Activated CD4-positive, alpha-beta memory T cell treated with anti-CD3 and anti-CD28 coated beads, Interleukin-2, amount 10 ng/mL, durations not matched to agents 7 days and 5 days (primary cell): ENCODE measurements at regions of chr9 and their contacts with region 1.

Region 1: GRCh38 chr9:133149126-133150107 is 14.3 kb downstream of the GBGT1 start:
- DNase-seq: peak; percentile 83
- H3K4me3 Mint-ChIP-seq: peak overlapping the region; percentile 69
- H3K27ac Mint-ChIP-seq: peak overlapping the region; percentile 58
- H3K4me1 Mint-ChIP-seq: peaks cover 38% of the 10 kb centered on the region
- H3K27me3 Mint-ChIP-seq: no peaks in the 10 kb centered on the region

Region 2: DNA sequence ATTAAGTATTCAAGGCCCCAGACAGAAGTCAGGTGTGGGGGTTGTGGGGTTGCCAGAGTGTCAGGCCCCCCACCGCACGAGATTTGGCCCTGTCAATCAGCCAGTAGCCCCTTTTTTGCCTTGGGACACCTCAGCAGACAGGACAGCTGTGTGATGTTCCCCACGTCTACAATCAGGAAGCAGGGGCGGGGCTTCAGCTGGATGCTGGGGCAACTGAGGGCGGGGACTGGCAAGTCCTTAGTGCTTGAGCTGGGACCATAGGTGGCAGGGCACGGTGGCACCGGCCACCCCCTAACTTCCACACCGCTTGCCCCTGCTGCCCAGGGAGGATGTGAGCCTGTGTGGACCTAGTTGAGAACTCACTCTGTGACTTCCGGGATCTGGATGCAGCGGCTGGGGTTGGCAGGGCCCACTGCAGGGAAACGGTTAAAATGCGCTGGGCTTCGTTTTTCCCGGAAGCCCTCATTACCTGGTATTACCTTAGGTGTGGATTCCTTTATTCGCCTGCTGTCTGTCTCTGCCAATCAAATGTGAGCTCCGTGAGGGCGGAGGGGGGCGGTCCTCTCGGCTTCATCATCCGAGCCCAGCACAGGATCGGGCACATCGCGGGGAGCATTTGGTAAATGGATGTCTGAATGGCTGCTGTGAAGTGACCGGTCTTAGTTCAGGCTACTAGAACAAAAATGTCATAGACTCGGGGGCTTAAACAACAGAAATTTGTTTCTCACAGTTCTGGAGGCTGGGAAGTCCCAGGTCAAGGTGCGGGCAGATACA is 126.1 kb before region 1 on chr9:
- CTCF ChIA-PET with region 1: interaction called, 35 read pairs
- POLR2A ChIA-PET with region 1: interaction called, 8 read pairs
- DNase-seq: peak; percentile 76
- H3K4me3 Mint-ChIP-seq: peak overlapping the region; percentile 44
- H3K27ac Mint-ChIP-seq: peak overlapping the region; percentile 49
- H3K4me1 Mint-ChIP-seq: peaks cover 20% of the 10 kb centered on the region
- H3K27me3 Mint-ChIP-seq: peaks cover 4% of the 10 kb centered on the region

Region 3: GRCh38 chr9:133103183-133103986 is 46.0 kb before region 1 on chr9:
- CTCF ChIA-PET with region 1: interaction called, 131 read pairs
- POLR2A ChIA-PET with region 1: interaction called, 22 read pairs
- DNase-seq: peak; percentile 58
- H3K4me3 Mint-ChIP-seq: no peak overlapping the region
- H3K27ac Mint-ChIP-seq: peak overlapping the region; percentile 64
- H3K4me1 Mint-ChIP-seq: no peaks in the 10 kb centered on the region
- H3K27me3 Mint-ChIP-seq: no peaks in the 10 kb centered on the region

Region 4: GRCh38 chr9:133108794-133109641 is 40.4 kb before region 1 on chr9:
- CTCF ChIA-PET with region 1: interaction called, 131 read pairs
- POLR2A ChIA-PET with region 1: interaction called, 131 read pairs
- DNase-seq: no peak
- H3K4me3 Mint-ChIP-seq: no peak overlapping the region
- H3K27ac Mint-ChIP-seq: no peak overlapping the region
- H3K4me1 Mint-ChIP-seq: peaks cover 23% of the 10 kb centered on the region
- H3K27me3 Mint-ChIP-seq: no peaks in the 10 kb centered on the region

Region 5: DNA sequence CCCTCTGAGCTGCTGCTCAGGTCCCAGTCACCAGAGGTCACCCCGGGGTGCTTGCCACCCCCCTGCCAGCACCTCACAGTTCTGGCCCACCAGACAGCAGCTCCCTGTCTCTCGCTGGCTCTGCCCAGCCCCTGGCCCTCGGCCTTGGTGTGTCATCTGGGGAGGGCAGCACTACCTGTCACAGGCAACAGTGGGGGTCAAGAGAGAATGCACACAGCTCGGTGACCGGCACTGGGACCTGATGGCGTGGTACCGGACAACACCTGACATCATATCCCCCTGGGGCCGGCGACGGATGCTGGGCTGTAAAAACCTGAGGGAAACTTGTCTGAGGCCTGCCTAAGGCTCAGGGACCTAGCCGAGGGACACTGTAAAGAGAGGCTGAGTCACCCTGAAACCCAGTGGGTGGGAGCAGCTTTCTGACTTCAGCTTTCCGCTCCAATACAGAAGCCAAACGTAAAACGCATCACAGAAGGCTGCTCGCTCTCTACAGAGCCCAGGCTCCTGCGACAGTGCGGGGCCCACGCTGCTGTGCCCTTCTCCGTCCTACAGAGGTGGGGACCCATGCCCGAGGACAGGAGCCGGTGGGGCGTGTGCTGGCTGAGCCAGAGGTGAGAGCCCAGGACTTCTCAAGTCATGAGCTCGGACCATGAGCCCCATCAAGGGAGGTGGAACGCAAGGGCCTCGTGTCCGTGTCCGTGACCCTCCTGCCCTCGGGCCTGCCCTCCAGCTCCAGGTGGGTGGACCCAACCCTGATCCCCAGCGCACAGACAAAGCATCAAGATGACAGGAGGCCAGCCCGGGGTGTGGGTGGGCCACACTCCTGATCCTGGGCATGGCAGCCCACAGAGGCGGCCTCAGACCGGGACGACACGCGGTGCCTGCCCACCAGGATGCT is 33.7 kb before region 1 on chr9:
- CTCF ChIA-PET with region 1: interaction called, 93 read pairs
- POLR2A ChIA-PET with region 1: interaction called, 131 read pairs
- DNase-seq: peak; percentile 79
- H3K4me3 Mint-ChIP-seq: peak overlapping the region; percentile 35
- H3K27ac Mint-ChIP-seq: peak overlapping the region; percentile 87
- H3K4me1 Mint-ChIP-seq: peaks cover 83% of the 10 kb centered on the region
- H3K27me3 Mint-ChIP-seq: no peaks in the 10 kb centered on the region

Region 6: DNA sequence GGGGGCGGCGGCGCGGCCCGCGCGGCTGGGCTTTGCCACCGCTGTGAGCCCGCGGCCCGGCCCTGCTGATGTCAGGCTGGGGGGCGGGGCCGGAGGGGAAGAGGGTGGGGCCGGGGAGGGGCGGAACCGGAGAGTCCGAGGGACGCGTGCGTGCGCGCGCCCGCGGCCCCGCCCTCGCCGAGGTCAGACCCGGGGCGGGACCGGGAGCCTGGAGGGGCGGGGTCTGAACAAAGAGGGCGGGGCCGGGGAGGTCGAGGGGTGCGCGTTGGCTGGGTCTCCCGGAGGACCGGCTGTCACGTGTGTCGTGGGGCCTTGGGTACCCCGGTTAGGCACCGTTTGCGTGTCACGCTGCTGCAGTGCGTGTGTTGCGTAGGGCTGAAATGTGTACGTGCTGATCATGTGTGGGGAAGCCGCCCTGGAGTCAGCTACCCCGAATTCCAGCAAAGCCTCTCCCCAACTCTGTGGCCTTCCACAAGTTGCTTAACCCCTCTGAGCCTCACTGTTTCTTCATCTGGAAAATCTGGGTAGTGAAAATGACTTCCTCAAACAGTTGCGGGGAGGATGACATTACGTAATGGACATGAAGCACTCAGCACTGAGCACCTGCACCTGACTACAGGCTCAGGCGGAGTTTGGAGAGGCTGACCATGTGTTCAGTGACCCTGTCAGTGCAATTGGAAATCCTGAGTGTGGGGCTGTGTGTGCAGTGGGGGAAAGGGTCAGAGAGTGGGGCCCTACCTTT is 28.0 kb before region 1 on chr9 and contains the start of gene RALGDS:
- CTCF ChIA-PET with region 1: interaction called, 93 read pairs
- POLR2A ChIA-PET with region 1: interaction called, 131 read pairs
- DNase-seq: peak; percentile 91
- H3K4me3 Mint-ChIP-seq: peak within 1 kb of the TSS; percentile 69
- H3K27ac Mint-ChIP-seq: peak within 1 kb of the TSS; percentile 70
- H3K4me1 Mint-ChIP-seq: peaks cover 86% of the 10 kb centered on the region
- H3K27me3 Mint-ChIP-seq: no peaks in the 10 kb centered on the region
- total RNA-seq, gene RALGDS: 113 to 123 TPM

Region 7: DNA sequence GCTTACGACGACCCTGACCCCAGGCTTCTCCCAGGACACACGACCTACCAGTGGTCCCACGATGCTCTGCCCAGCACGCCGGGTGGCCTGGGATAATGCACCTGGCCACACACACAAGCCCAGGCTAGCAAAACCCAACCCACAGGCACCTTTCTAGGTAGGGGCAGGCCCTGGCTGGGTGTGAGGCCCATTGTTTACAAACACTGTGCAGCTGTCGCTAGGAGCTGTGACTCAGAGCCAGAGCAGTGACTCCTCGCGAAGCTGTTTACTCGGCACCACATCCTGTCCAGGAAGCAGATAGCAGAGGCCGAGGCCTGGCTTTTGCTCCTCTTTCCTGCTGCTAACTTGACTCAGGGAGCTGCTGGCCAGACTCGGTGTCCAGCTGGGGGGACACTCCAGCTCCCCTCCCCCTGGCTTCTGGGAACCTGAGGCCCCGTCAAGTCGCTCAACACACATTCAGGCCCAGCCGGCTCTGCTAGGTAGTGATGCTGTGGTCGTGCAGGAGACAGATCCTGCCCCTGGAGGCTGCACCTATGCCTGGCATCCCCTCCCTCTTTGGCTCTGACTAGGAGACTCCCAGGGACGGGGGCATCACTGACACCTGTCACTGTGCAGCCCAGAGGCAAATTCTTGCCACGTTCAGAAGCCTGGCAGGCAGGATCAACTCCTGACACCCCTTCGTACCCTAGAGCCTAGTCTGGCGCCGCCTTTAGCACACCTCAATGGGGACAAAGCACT is 15.6 kb before region 1 on chr9:
- CTCF ChIA-PET with region 1: interaction called, 190 read pairs
- POLR2A ChIA-PET with region 1: interaction called, 118 read pairs
- DNase-seq: peak; percentile 94
- H3K4me3 Mint-ChIP-seq: peak overlapping the region; percentile 36
- H3K27ac Mint-ChIP-seq: peak overlapping the region; percentile 99
- H3K4me1 Mint-ChIP-seq: peaks cover 88% of the 10 kb centered on the region
- H3K27me3 Mint-ChIP-seq: no peaks in the 10 kb centered on the region

Region 8: GRCh38 chr9:133429641-133430161 is 280.3 kb after region 1 on chr9:
- CTCF ChIA-PET with region 1: no interaction called
- POLR2A ChIA-PET with region 1: no interaction called
- DNase-seq: no peak
- H3K4me3 Mint-ChIP-seq: no peak overlapping the region
- H3K27ac Mint-ChIP-seq: no peak overlapping the region
- H3K4me1 Mint-ChIP-seq: peaks cover 2% of the 10 kb centered on the region
- H3K27me3 Mint-ChIP-seq: peaks cover 19% of the 10 kb centered on the region